ENCODE measurements at regions of chr22 and their contacts with region 1.

Region 1: GRCh38 chr22:21917181-21917958 is 35.3 kb downstream of the PPM1F start:
- DNase-seq: no peak

Region 2: DNA sequence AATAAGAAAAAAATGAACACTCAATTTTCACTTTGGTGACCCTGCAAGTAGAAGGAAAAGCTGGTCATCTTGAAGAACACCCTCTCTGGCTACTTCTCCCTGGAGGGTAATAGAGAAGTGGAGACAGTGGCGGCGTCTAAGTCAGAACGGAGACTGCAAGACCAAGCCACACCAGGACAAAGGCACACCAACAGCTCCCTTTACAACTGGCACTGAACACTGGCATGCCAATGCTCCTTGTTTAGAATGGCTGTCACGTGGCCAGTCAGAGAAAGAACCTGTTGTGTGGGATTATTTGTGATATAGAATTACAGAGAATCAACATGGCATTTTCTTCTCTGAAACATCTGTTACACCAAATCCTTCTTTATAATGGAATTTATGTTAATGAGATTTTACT is 120.5 kb before region 1 on chr22:
- intact Hi-C with region 1: loop called (anchors 5 kb)
- DNase-seq: no peak

Region 3: DNA sequence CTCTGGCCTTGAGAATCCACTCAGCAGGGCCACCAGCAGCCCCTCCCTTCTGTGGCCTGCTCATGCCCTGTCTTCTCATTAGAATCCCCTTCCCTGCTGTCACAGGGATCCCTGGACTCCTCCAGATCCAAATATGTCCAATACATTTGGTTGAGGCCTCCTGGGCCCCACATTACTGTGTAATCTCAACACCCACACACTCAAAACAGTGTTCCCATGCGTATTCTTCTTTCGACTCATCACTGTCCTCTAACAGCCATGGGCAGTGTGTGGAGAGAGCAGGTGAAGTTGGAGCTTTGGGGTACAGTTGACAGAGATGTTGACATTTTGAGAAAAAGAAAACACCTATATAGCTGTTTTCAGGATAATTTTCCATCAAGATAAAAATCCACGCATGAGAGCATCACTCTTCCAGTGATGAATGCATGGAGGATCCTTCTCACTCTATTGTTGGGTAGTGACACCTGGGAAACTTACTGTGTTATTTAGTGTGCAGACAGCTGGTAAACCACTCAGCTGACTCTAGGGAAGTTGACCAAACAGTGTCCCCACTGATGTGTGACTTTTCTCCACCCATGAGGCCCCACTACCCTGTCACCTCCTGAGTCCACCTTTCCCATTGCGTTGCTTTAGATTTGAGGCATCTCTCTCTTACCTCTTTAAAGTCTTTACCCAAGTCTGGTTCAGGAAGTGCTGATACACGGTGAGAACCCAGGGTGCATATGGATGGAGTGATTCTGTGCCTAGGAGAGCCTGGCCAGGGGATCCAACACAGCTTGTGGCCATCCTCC is 298.5 kb after region 1 on chr22:
- intact Hi-C with region 1: no loop called
- DNase-seq: no peak

Measured in cardiac septum (tissue), 1 donor.